SK-N-SH (cell line): ENCODE measurements at regions of chr16 and their contacts with region 1.

Region 1: GRCh38 chr16:89171463-89172170 is at the start of gene CDH15:
- DNase-seq: peak; percentile 98
- H3K4me3 ChIP-seq: peak within 1 kb of the TSS in 1 of 2 experiments; percentile 21; a peak in 1 of 4 replicates
- H3K27ac ChIP-seq: no peak within 1 kb of the TSS
- H3K4me1 ChIP-seq: peaks cover 0 to 27% of the 10 kb centered on the region in 2 experiments; a peak in 1 of 4 replicates
- H3K27me3 ChIP-seq: peaks cover 24% of the 10 kb centered on the region; the same call in 1 of the 2 replicates
- CTCF ChIP-seq: no peak
- EP300 ChIP-seq: no peak
- RAD21 ChIP-seq: no peak
- polyA plus RNA-seq, gene CDH15: 0.03 and 0.08 TPM in 2 replicates

Region 2: GRCh38 chr16:88737298-88738150 is 434.1 kb before region 1 on chr16:
- CTCF ChIA-PET with region 1: interaction called, 34 read pairs
- POLR2A ChIA-PET with region 1: no interaction called
- DNase-seq: peak; percentile 94
- H3K4me3 ChIP-seq: no peak overlapping the region; a peak in 1 of 4 replicates
- H3K27ac ChIP-seq: no peak overlapping the region
- H3K4me1 ChIP-seq: peaks cover 0 to 4% of the 10 kb centered on the region in 2 experiments; a peak in 1 of 4 replicates
- H3K27me3 ChIP-seq: no peaks in the 10 kb centered on the region
- CTCF ChIP-seq: peak; percentile 88
- EP300 ChIP-seq: no peak
- RAD21 ChIP-seq: peak; percentile 56

Region 3: GRCh38 chr16:88811769-88812512 is 359.7 kb before region 1 on chr16 and contains the start of gene APRT:
- CTCF ChIA-PET with region 1: interaction called, 82 read pairs
- POLR2A ChIA-PET with region 1: interaction called, 3 read pairs
- DNase-seq: peak; percentile 99
- H3K4me3 ChIP-seq: peak within 1 kb of the TSS; percentile 73 to 74
- H3K27ac ChIP-seq: peak within 1 kb of the TSS; percentile 79 to 91
- H3K4me1 ChIP-seq: peaks cover 10 to 29% of the 10 kb centered on the region in 2 experiments; a peak in 2 of 4 replicates
- H3K27me3 ChIP-seq: no peaks in the 10 kb centered on the region
- CTCF ChIP-seq: peak; percentile 36
- EP300 ChIP-seq: no peak
- RAD21 ChIP-seq: peak; percentile 53
- polyA plus RNA-seq, gene APRT: 178 and 192 TPM in 2 replicates

Region 4: GRCh38 chr16:88856828-88857733 is 314.5 kb before region 1 on chr16 and contains the starts of genes GALNS and TRAPPC2L:
- CTCF ChIA-PET with region 1: interaction called, 13 read pairs
- POLR2A ChIA-PET with region 1: no interaction called
- DNase-seq: peak; percentile 100
- H3K4me3 ChIP-seq: peak within 1 kb of the TSS; percentile 90 to 98
- H3K27ac ChIP-seq: peak within 1 kb of the TSS; percentile 39 to 75; a peak in 2 of 4 replicates
- H3K4me1 ChIP-seq: peaks cover 5 to 15% of the 10 kb centered on the region in 2 experiments; a peak in 1 of 4 replicates
- H3K27me3 ChIP-seq: no peaks in the 10 kb centered on the region
- CTCF ChIP-seq: no peak
- EP300 ChIP-seq: no peak
- RAD21 ChIP-seq: no peak
- polyA plus RNA-seq, gene GALNS: 13.8 and 16.5 TPM in 2 replicates
- polyA plus RNA-seq, gene TRAPPC2L: 73.9 and 74.4 TPM in 2 replicates

Region 5: GRCh38 chr16:88941913-88942909 is 229.4 kb before region 1 on chr16:
- CTCF ChIA-PET with region 1: interaction called, 67 read pairs
- POLR2A ChIA-PET with region 1: no interaction called
- DNase-seq: peak; percentile 95
- H3K4me3 ChIP-seq: no peak overlapping the region
- H3K27ac ChIP-seq: no peak overlapping the region
- H3K4me1 ChIP-seq: peaks cover 0 to 21% of the 10 kb centered on the region in 2 experiments; a peak in 1 of 4 replicates
- H3K27me3 ChIP-seq: peaks cover 83% of the 10 kb centered on the region
- CTCF ChIP-seq: peak; percentile 61
- EP300 ChIP-seq: no peak
- RAD21 ChIP-seq: peak; percentile 69

Region 6: DNA sequence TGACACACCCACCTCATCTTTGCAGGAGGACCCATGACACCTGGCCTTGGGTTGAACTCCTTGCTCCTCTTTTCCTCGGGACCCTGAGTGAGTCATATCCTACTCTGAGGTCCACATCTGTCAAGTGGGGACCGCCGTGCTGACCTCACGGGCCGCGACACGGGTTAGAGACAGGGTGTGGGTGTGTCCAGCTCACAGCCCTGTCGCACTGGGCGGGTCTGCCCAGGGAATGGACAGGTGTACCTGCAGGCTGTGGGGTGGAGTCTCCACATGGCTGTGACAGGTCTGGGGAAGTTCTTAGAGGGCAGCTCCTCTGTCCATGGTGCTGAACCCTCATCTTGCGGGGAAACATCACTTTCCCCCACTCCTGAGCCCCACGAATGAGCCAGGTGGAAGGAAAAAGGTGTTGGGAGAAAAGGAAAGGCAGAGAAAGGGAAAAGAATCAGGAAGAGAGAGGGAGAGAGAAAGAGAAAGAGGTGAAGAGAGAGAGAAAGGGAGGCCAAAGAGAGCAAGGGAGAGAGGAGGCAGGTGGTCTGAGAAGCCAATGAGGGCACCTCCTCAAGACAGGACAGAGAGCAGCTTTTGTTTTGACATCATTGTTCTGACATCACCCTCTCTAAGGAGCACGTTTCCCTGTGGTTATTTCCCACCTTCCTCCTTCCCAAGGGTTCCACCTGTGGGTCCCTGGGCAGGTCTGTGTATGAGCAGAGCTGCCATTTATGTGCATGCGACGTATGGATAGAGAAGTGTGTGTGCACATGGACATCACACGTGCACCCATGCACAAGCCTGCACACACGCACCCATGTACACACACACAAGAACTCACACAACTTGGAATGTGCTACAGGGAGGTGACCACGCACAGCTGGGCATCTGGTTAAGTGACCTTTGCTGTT is 162.1 kb before region 1 on chr16:
- CTCF ChIA-PET with region 1: no interaction called
- POLR2A ChIA-PET with region 1: no interaction called
- DNase-seq: no peak
- H3K4me3 ChIP-seq: no peak overlapping the region
- H3K27ac ChIP-seq: no peak overlapping the region
- H3K4me1 ChIP-seq: no peaks in the 10 kb centered on the region
- H3K27me3 ChIP-seq: no peaks in the 10 kb centered on the region
- CTCF ChIP-seq: no peak
- EP300 ChIP-seq: no peak
- RAD21 ChIP-seq: no peak

Region 7: DNA sequence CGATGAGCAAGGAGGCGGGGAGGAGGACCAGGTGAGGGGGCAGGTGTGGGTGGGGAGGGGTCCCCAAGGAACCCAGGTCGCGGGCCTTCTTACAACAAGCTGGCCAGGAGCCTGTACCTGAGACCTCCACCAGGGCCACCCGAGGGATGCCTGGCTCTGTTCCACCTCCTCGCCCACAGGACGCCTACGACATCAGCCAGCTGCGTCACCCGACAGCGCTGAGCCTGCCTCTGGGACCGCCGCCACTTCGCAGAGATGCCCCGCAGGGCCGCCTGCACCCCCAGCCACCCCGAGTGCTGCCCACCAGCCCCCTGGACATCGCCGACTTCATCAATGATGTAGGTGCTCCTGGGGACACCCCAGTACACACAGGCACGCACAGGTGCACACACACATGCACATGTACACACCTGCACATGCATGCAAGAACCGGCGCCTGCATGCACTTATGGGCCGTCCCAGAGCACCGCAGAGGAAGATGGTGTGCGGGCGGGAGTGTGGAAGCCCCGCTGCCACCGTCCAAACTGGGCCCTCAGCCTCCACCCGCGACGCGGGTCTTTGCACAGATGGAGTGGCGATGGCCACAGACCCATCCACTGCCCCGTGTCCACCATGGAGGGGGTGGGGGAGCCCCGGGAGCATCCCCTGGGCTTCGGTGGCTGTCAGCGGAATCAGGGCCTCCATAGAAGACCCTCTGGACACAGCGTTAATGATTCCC is 22.1 kb after region 1 on chr16:
- CTCF ChIA-PET with region 1: no interaction called
- POLR2A ChIA-PET with region 1: no interaction called
- DNase-seq: peak; percentile 59
- H3K4me3 ChIP-seq: peak overlapping the region in 1 of 2 experiments; percentile 19; a peak in 1 of 4 replicates
- H3K27ac ChIP-seq: no peak overlapping the region
- H3K4me1 ChIP-seq: peaks cover 0 to 15% of the 10 kb centered on the region in 2 experiments; a peak in 1 of 4 replicates
- H3K27me3 ChIP-seq: peaks cover 8% of the 10 kb centered on the region; the same call in 1 of the 2 replicates
- CTCF ChIP-seq: no peak
- EP300 ChIP-seq: no peak
- RAD21 ChIP-seq: no peak

Region 8: GRCh38 chr16:89230255-89230654 is 58.6 kb after region 1 on chr16:
- CTCF ChIA-PET with region 1: no interaction called
- POLR2A ChIA-PET with region 1: no interaction called
- DNase-seq: no peak
- H3K4me3 ChIP-seq: no peak overlapping the region
- H3K27ac ChIP-seq: no peak overlapping the region
- H3K4me1 ChIP-seq: no peaks in the 10 kb centered on the region
- H3K27me3 ChIP-seq: no peaks in the 10 kb centered on the region
- CTCF ChIP-seq: no peak
- EP300 ChIP-seq: no peak
- RAD21 ChIP-seq: no peak